ENCODE measurements at regions of chr20 and their contacts with region 1.

Region 1: GRCh38 chr20:46681032-46681854 is 8.0 kb downstream of the TP53RK start:
- DNase-seq: peak; percentile 67
- H3K4me3 ChIP-seq: peak overlapping the region in 1 of 2 experiments; percentile 50; a peak in 1 of 4 replicates
- H3K27ac ChIP-seq: no peak overlapping the region
- H3K4me1 ChIP-seq: peaks cover 0 to 4% of the 10 kb centered on the region in 2 experiments; a peak in 1 of 4 replicates
- H3K27me3 ChIP-seq: no peaks in the 10 kb centered on the region
- CTCF ChIP-seq: peak; percentile 81
- EP300 ChIP-seq: no peak
- RAD21 ChIP-seq: peak; percentile 78

Region 2: DNA sequence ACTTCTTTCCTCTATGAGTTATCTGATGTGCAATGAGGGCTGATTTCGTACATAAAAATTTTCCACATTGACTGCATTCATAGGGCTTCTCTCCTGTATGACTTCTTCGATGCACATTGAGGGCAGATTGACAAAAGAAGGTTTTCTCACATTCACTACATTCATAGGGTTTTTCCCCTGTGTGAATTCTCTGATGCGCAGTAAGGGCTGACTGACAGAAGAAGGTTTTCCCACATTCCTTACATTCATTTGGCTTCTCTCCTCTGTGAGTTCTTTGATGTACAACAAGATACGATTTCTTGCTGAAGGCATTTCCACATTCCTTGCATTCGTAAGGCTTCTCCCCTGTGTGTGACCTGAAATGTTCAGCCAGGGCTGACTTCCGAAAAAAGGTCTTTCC is 179.3 kb before region 1 on chr20:
- CTCF ChIA-PET with region 1: no interaction called
- POLR2A ChIA-PET with region 1: no interaction called
- DNase-seq: no peak
- H3K4me3 ChIP-seq: no peak overlapping the region
- H3K27ac ChIP-seq: no peak overlapping the region
- H3K4me1 ChIP-seq: no peaks in the 10 kb centered on the region; a peak in 1 of 4 replicates
- H3K27me3 ChIP-seq: no peaks in the 10 kb centered on the region
- CTCF ChIP-seq: no peak
- EP300 ChIP-seq: no peak
- RAD21 ChIP-seq: no peak

Region 3: GRCh38 chr20:46512943-46513844 is 168.0 kb before region 1 on chr20 and contains the start of gene ZNF334:
- CTCF ChIA-PET with region 1: interaction called, 18 read pairs
- POLR2A ChIA-PET with region 1: no interaction called
- DNase-seq: peak; percentile 94
- H3K4me3 ChIP-seq: peak within 1 kb of the TSS; percentile 63 to 86
- H3K27ac ChIP-seq: peak within 1 kb of the TSS in 1 of 2 experiments; percentile 83; a peak in 2 of 4 replicates
- H3K4me1 ChIP-seq: peaks cover 0 to 2% of the 10 kb centered on the region in 2 experiments; a peak in 1 of 4 replicates
- H3K27me3 ChIP-seq: no peaks in the 10 kb centered on the region
- CTCF ChIP-seq: no peak
- EP300 ChIP-seq: no peak
- RAD21 ChIP-seq: no peak
- polyA plus RNA-seq, gene ZNF334: 4.5 and 5.5 TPM in 2 replicates

Region 4: DNA sequence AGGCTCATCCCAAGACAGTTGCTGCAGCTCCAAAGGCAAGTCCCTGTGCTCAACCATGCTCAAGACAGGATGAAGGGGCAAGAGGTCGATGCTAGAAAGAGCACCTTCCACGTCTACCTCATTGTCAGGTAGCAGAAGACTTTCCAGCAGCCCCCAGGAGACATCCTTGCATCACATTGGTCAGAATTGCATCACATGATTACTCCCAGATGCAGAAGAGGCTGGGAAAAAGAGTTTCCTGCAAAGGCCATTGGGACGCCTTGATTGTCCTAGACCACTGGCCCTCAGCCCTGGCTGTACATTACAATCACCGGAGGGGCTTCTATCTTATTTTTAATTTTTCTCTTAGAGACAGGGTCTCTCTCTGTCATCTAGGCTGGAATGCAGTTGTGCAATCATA is 150.6 kb before region 1 on chr20:
- CTCF ChIA-PET with region 1: interaction called, 116 read pairs
- POLR2A ChIA-PET with region 1: no interaction called
- DNase-seq: no peak
- H3K4me3 ChIP-seq: no peak overlapping the region
- H3K27ac ChIP-seq: no peak overlapping the region
- H3K4me1 ChIP-seq: no peaks in the 10 kb centered on the region
- H3K27me3 ChIP-seq: no peaks in the 10 kb centered on the region; the same call in 1 of the 2 replicates
- CTCF ChIP-seq: no peak
- EP300 ChIP-seq: no peak
- RAD21 ChIP-seq: no peak

Region 5: GRCh38 chr20:46562373-46563169 is 118.7 kb before region 1 on chr20:
- CTCF ChIA-PET with region 1: interaction called, 102 read pairs
- POLR2A ChIA-PET with region 1: no interaction called
- DNase-seq: peak; percentile 80
- H3K4me3 ChIP-seq: peak overlapping the region; percentile 15 to 37; a peak in 3 of 4 replicates
- H3K27ac ChIP-seq: no peak overlapping the region; a peak in 1 of 4 replicates
- H3K4me1 ChIP-seq: peaks cover 0 to 12% of the 10 kb centered on the region in 2 experiments; a peak in 1 of 4 replicates
- H3K27me3 ChIP-seq: no peaks in the 10 kb centered on the region
- CTCF ChIP-seq: peak; percentile 92
- EP300 ChIP-seq: no peak
- RAD21 ChIP-seq: peak; percentile 59

Region 6: GRCh38 chr20:46703435-46703834 is 22.2 kb after region 1 on chr20:
- CTCF ChIA-PET with region 1: interaction called, 11 read pairs
- POLR2A ChIA-PET with region 1: no interaction called
- DNase-seq: no peak
- H3K4me3 ChIP-seq: no peak overlapping the region
- H3K27ac ChIP-seq: no peak overlapping the region
- H3K4me1 ChIP-seq: no peaks in the 10 kb centered on the region
- H3K27me3 ChIP-seq: no peaks in the 10 kb centered on the region
- CTCF ChIP-seq: no peak
- EP300 ChIP-seq: no peak
- RAD21 ChIP-seq: no peak

Measured in SK-N-SH (cell line).